K562 (cell line): ENCODE measurements at regions of chr2 and their contacts with region 1.

Region 1: GRCh38 chr2:158179660-158180059 is 78.0 kb downstream of the UPP2 start:
- DNase-seq: peak in 1 of 4 experiments; percentile 39
- ATAC-seq: peak; percentile 81
- H3K4me3 ChIP-seq: no peak overlapping the region
- H3K27ac ChIP-seq: no peak overlapping the region
- H3K4me1 ChIP-seq: no peaks in the 10 kb centered on the region
- H3K27me3 ChIP-seq: no peaks in the 10 kb centered on the region
- CTCF ChIP-seq: peak; percentile 36 to 69 (median 56); a peak in 5 of 6 replicates
- EP300 ChIP-seq: no peak
- POLR2A ChIP-seq: no peak
- RAD21 ChIP-seq: peak; percentile 60 to 84

Region 2: DNA sequence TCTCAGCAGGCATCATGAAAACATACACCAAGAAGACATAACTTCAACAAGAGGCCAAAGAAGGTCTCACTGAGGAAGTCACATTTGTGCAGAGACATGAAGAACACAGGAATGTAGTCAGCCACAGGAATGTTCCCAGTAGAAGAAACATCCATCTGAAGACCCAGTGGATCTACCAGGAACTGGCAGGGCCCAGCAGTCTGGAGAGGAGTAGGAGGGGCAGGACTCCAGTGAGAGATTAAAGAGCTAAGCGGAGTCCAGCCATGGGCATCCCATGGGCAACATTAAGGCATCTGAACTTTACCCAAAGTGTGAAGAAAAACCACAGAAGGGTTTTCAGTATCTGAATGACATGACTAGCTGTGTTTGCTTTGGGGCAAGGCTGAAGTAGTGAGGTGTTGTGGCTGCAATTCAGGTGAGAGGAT is 25.1 kb after region 1 on chr2:
- CTCF ChIA-PET with region 1: no interaction called
- POLR2A ChIA-PET with region 1: no interaction called
- in situ Hi-C with region 1: no loop called
- intact Hi-C with region 1: no loop called
- DNase-seq: no peak
- ATAC-seq: no peak
- H3K4me3 ChIP-seq: no peak overlapping the region
- H3K27ac ChIP-seq: no peak overlapping the region
- H3K4me1 ChIP-seq: no peaks in the 10 kb centered on the region
- H3K27me3 ChIP-seq: no peaks in the 10 kb centered on the region
- CTCF ChIP-seq: no peak
- EP300 ChIP-seq: no peak
- POLR2A ChIP-seq: no peak
- RAD21 ChIP-seq: no peak

Region 3: GRCh38 chr2:158464426-158465281 is 285.0 kb after region 1 on chr2:
- CTCF ChIA-PET with region 1: no interaction called
- POLR2A ChIA-PET with region 1: no interaction called
- in situ Hi-C with region 1: no loop called
- intact Hi-C with region 1: loop called (anchors 5 kb)
- DNase-seq: peak; percentile 50 to 62 (median 54)
- ATAC-seq: peak; percentile 89
- H3K4me3 ChIP-seq: no peak overlapping the region
- H3K27ac ChIP-seq: no peak overlapping the region
- H3K4me1 ChIP-seq: peaks cover 3 to 21% of the 10 kb centered on the region in 2 experiments; a peak in 4 of 5 replicates
- H3K27me3 ChIP-seq: no peaks in the 10 kb centered on the region
- CTCF ChIP-seq: peak; percentile 45 to 72 (median 65); a peak in 5 of 6 replicates
- EP300 ChIP-seq: no peak
- POLR2A ChIP-seq: no peak
- RAD21 ChIP-seq: peak; percentile 21 to 42; a peak in 3 of 4 replicates

Region 4: DNA sequence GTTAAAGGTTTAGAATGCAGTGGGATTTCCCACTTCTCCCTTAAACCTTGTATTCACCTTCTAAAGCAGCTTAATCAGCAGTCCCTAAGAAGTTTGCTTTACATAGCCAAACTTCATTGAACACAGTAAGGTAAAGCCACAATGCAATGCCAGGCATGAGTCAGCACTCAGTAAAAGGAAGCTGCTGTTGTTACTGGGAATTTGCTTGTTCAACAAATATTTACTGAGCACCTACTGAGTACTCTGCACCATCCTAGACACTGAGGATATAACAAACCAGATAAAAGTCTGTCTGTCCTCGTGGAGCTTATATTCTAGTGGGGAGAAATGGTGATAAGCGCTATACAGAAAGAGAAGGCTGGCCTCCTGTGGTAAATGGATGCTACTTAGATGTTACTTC is 439.8 kb after region 1 on chr2:
- CTCF ChIA-PET with region 1: no interaction called
- POLR2A ChIA-PET with region 1: no interaction called
- in situ Hi-C with region 1: no loop called
- intact Hi-C with region 1: loop called (anchors 10 kb)
- DNase-seq: peak in 1 of 4 experiments; percentile 17
- ATAC-seq: peak; percentile 59
- H3K4me3 ChIP-seq: no peak overlapping the region
- H3K27ac ChIP-seq: no peak overlapping the region
- H3K4me1 ChIP-seq: peaks cover 0 to 5% of the 10 kb centered on the region in 2 experiments; a peak in 1 of 5 replicates
- H3K27me3 ChIP-seq: no peaks in the 10 kb centered on the region
- CTCF ChIP-seq: no peak
- EP300 ChIP-seq: no peak
- POLR2A ChIP-seq: no peak
- RAD21 ChIP-seq: no peak